PC-9 (cell line): ENCODE measurements at regions of chr1 and their contacts with region 1.

Region 1: GRCh38 chr1:109509176-109510134 is at the start of gene AMIGO1:
- DNase-seq: peak; percentile 53 to 57
- H3K4me3 ChIP-seq: peak within 1 kb of the TSS; percentile 92
- H3K27ac ChIP-seq: no peak within 1 kb of the TSS
- H3K4me1 ChIP-seq: peaks cover 11% of the 10 kb centered on the region
- H3K27me3 ChIP-seq: no peaks in the 10 kb centered on the region
- CTCF ChIP-seq: no peak
- total RNA-seq, gene AMIGO1: 4.1 and 4.2 TPM in 2 replicates

Region 2: GRCh38 chr1:109388208-109388711 is 121.2 kb before region 1 on chr1:
- CTCF ChIA-PET with region 1: interaction called, 10 read pairs
- POLR2A ChIA-PET with region 1: no interaction called
- intact Hi-C with region 1: no loop called
- DNase-seq: no peak
- H3K4me3 ChIP-seq: no peak overlapping the region
- H3K27ac ChIP-seq: no peak overlapping the region
- H3K4me1 ChIP-seq: peaks cover 35% of the 10 kb centered on the region
- H3K27me3 ChIP-seq: no peaks in the 10 kb centered on the region
- CTCF ChIP-seq: no peak

Region 3: DNA sequence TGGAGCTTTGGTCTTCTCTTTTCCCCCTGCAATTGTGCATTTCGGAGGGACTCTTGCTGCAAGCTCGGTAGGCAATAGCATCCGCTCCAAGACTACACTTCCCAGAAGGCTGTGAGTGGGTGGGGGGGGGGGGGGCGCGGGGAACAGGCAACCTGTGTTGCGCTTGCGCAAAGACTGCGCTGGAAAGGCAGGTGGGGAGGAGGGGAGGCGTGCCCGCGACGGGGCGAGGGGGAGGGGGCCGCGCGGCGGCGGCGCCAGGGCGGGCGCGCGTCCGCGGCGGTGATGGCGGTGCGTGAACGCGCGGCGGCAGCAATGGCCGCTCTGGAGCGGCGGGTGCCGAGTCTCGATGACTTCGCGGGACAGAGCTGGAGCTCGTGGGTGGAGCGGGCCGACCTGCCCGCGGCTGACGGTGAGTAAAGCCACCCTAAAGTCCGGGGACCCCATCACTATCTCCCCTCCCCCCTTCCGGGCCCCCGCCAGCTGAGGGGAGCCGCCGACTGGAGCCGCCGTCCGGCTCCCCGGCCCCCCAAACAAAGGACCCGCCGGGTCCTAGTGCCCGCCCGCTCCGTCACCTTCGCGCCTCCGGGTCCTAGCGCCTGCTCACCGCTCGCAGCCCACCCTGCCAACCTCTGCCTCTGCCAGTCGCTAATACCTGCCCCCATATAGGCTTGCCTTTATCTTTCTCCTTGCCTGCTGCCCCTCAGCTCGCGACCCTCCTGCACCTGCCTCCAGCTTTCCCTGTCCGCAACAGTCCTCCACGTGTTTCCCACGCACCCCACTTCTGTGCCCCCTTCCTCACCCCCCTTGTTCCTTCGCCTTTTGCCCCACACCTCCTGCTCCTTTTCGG is 25.6 kb before region 1 on chr1 and contains the start of gene ATXN7L2:
- CTCF ChIA-PET with region 1: no interaction called
- POLR2A ChIA-PET with region 1: no interaction called
- intact Hi-C with region 1: loop called (anchors 1 kb)
- DNase-seq: peak; percentile 75 to 87
- H3K4me3 ChIP-seq: peak within 1 kb of the TSS; percentile 68
- H3K27ac ChIP-seq: peak within 1 kb of the TSS; percentile 63
- H3K4me1 ChIP-seq: peaks cover 11% of the 10 kb centered on the region
- H3K27me3 ChIP-seq: peaks cover 37% of the 10 kb centered on the region
- CTCF ChIP-seq: no peak
- total RNA-seq, gene ATXN7L2: 4.7 and 5.7 TPM in 2 replicates